ENCODE measurements at regions of chr2 and their contacts with region 1.

Region 1: DNA sequence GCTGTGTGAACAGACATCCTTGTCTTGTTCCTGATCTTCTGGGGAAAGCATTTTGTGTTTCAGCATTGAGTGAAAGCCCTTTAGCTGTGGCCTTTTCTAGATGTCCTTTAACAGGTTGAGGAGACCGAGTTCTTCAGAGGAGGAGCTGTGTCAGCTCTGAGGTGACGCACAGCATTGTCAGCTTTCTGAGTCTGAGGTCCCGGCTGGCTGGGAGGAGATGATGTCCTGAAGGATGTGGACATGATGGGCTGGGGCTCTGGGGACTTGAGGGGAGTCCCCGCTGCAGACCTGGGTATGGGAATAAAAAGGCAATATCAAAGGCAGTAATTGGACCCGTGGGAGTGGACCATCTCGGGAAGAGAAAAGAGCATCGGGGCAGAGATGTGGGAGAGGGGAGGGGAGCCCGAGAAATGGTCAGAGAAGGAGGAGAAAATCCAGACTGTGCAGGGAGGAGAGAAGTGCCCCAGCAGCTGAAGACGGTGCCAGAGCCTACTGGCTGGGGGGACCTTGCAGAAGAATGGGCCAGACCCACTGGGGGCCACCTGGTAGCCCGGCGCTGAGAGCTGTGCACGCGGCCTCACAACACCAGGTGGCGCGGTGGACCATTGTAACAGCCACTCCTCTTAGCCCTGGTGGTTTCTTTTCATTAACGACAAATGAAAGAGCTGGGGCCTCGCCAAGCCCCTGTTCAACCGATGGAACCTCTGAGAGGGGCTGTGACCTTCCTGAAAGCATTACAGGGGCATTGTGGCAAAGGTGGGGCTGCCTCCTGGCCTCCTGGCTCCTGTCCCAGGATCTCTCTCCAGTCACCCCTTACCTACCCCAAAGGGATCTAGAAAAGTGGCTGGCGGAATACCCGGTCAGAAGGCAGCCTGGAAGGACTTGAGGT is 61.6 kb downstream of the ST3GAL5 start:
- DNase-seq: peak; percentile 72 to 88
- ATAC-seq: peak; percentile 95 to 99
- H3K4me3 ChIP-seq: peak overlapping the region; percentile 21; the same call in 1 of the 3 replicates
- H3K27ac ChIP-seq: peak overlapping the region; percentile 74 to 84
- H3K4me1 ChIP-seq: peaks cover 8% of the 10 kb centered on the region
- CTCF ChIP-seq: peak; percentile 96
- EP300 ChIP-seq: no peak
- POLR2A ChIP-seq: no peak
- RAD21 ChIP-seq: peak; percentile 99

Region 2: DNA sequence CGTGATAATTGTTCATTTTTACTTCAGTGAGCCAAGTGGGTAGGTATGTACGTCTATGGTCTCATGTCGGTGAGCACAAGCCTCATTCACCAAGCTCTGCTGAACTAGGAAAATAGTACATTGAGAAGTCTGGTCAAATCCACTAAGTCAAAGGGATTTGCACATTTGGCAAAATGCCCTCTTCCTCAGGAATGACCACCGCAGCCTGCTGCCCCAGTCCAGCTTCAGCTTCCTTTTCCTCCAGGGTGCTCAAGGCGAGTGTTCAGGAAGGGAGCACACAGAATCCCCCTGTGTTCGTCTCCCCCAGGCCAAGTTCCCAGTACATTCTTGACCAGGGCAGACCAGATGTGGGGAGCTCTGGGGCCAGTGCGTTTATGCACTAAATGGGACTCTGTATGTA is 671.1 kb before region 1 on chr2:
- CTCF ChIA-PET with region 1: no interaction called
- POLR2A ChIA-PET with region 1: no interaction called
- DNase-seq: no peak
- ATAC-seq: no peak
- H3K4me3 ChIP-seq: no peak overlapping the region
- H3K27ac ChIP-seq: no peak overlapping the region
- H3K4me1 ChIP-seq: no peaks in the 10 kb centered on the region
- CTCF ChIP-seq: no peak
- EP300 ChIP-seq: no peak
- POLR2A ChIP-seq: no peak
- RAD21 ChIP-seq: no peak

Region 3: GRCh38 chr2:85642725-85643124 is 184.5 kb before region 1 on chr2:
- CTCF ChIA-PET with region 1: interaction called, 12 read pairs
- POLR2A ChIA-PET with region 1: no interaction called
- DNase-seq: no peak
- ATAC-seq: no peak
- H3K4me3 ChIP-seq: no peak overlapping the region
- H3K27ac ChIP-seq: no peak overlapping the region
- H3K4me1 ChIP-seq: peaks cover 1% of the 10 kb centered on the region; the same call in 1 of the 3 replicates
- CTCF ChIP-seq: no peak
- EP300 ChIP-seq: no peak
- POLR2A ChIP-seq: no peak
- RAD21 ChIP-seq: no peak

Region 4: DNA sequence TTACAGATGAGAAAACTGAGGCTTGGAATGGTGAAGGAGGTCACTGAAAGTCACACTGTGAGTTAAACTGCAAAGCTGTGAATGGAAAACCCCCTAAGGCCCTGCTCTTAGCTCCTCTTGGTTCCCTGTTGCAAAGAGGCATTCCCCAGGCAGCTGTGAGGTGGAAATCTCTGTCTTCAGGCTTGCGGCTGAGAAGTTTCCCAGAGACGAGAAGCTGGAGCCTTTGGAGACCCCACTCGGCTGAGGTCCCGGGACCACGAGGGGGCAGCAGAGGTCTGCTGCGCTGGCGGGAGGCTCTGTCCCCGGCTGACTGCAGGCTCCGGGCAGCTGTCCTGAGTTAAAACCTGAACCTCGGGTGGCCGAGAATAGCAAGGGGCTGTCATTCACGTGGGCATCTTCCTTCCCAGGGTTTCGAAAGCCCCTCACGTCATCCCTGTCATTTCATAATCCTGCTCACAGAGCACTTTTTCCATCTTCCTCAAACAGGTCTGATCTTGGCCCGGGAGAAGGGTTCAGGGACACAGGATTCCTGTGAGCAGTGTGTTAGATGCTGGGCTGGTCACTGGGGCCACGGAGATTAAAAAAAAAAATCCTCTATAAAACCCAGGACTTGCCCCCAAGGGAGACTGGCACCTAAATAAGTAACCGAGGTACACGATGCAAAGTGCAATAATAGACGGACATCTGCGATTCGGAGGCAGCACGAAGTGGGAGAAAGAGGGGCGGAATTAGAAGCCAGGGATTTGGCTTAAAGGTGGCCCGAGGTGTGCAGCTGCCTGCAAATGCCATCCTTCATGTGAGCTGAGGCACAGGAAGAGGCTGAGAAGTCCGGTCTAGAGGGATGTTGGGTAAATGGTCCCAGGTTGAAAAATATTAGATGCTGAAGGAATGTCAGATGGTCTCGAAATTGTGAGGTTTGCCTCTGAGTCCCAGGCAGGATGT is 98.1 kb before region 1 on chr2:
- CTCF ChIA-PET with region 1: interaction called, 1,675 read pairs
- POLR2A ChIA-PET with region 1: no interaction called
- DNase-seq: peak; percentile 83 to 93
- ATAC-seq: peak; percentile 96 to 99
- H3K4me3 ChIP-seq: 0 out of 3 replicates have a peak overlapping the region, but pooled peaks have one; percentile 11
- H3K27ac ChIP-seq: peak overlapping the region; percentile 68 to 70
- H3K4me1 ChIP-seq: peaks cover 24% of the 10 kb centered on the region
- CTCF ChIP-seq: peak; percentile 99
- EP300 ChIP-seq: peak in 1 of 2 experiments; percentile 51; a peak in 1 of 5 replicates
- POLR2A ChIP-seq: no peak
- RAD21 ChIP-seq: peak; percentile 100

Region 5: GRCh38 chr2:85843543-85843942 is 16.3 kb after region 1 on chr2:
- CTCF ChIA-PET with region 1: interaction called, 59 read pairs
- POLR2A ChIA-PET with region 1: no interaction called
- DNase-seq: peak; percentile 50 to 52
- ATAC-seq: peak in 1 of 2 experiments; percentile 49; a peak in 1 of 6 replicates
- H3K4me3 ChIP-seq: no peak overlapping the region
- H3K27ac ChIP-seq: no peak overlapping the region
- H3K4me1 ChIP-seq: no peaks in the 10 kb centered on the region
- CTCF ChIP-seq: peak; percentile 42
- EP300 ChIP-seq: no peak
- POLR2A ChIP-seq: no peak
- RAD21 ChIP-seq: peak in 1 of 2 experiments; percentile 31; a peak in 1 of 5 replicates

Region 6: GRCh38 chr2:85865539-85866164 is 38.4 kb after region 1 on chr2:
- CTCF ChIA-PET with region 1: interaction called, 24 read pairs
- POLR2A ChIA-PET with region 1: no interaction called
- DNase-seq: no peak
- ATAC-seq: peak in 1 of 2 experiments; percentile 13; a peak in 1 of 6 replicates
- H3K4me3 ChIP-seq: no peak overlapping the region
- H3K27ac ChIP-seq: no peak overlapping the region
- H3K4me1 ChIP-seq: no peaks in the 10 kb centered on the region
- CTCF ChIP-seq: no peak
- EP300 ChIP-seq: no peak
- POLR2A ChIP-seq: no peak
- RAD21 ChIP-seq: no peak

Region 7: DNA sequence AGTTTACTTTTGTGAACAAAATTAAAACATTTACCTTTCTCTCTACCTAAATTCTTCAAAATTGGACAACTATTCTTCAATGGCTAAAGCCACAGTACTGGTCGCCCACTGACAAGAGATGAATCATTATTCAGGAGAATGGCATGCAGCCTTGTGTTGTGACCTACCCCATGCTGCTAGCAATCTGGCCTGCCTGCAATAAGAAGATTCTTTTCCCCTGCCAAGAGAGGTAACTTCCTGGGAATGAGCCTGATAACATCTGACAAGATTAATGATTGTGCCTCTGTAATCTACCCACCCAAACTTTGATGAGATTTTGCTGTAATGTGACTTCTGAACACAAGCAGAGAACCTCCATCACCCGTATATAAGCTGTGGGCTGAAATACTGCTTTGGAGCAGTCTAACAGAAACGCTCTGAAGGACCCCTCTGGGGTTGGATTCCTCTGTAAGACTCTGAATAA is 108.5 kb after region 1 on chr2:
- CTCF ChIA-PET with region 1: interaction called, 14 read pairs
- POLR2A ChIA-PET with region 1: no interaction called
- DNase-seq: peak; percentile 87 to 99
- ATAC-seq: peak; percentile 82
- H3K4me3 ChIP-seq: peak overlapping the region; percentile 29
- H3K27ac ChIP-seq: peak overlapping the region; percentile 89 to 99
- H3K4me1 ChIP-seq: peaks cover 68% of the 10 kb centered on the region
- CTCF ChIP-seq: no peak
- EP300 ChIP-seq: peak; percentile 93 to 95; a peak in 4 of 5 replicates
- POLR2A ChIP-seq: no peak
- RAD21 ChIP-seq: peak; percentile 54 to 56

Region 8: DNA sequence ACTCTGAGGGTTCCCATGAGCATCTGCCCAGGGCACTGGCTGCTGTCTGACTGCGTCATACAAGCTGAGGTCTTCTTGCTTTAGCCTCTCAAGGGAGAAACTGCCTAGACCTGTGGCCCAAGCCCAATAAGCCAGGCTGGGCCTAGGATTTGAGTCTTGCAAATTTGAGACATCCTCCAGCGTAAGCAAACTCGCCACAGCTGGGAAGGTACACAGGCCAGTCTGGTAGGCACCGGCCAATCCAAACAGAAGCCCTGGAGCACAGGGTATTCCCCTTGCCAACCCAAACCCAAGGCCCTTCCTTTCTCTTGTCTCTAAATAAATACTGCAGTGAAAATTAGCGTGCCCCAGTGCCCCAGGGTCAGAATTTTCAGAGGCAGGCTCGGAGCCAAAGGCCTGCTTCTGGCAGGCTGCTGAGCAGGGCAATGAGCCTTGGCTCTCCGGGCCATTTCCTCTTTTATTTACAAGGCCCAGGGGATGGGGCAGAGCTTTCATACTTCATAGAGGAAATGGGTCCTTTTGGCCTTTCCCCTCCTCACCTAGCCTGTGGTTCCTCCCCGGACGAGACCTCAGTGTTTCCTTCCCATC is 245.1 kb after region 1 on chr2:
- CTCF ChIA-PET with region 1: interaction called, 766 read pairs
- POLR2A ChIA-PET with region 1: no interaction called
- DNase-seq: peak in 1 of 2 experiments; percentile 55
- ATAC-seq: peak; percentile 10 to 71; a peak in 4 of 6 replicates
- H3K4me3 ChIP-seq: no peak overlapping the region
- H3K27ac ChIP-seq: peak overlapping the region; percentile 7 to 72; a peak in 4 of 6 replicates
- H3K4me1 ChIP-seq: peaks cover 41% of the 10 kb centered on the region
- CTCF ChIP-seq: no peak
- EP300 ChIP-seq: no peak
- POLR2A ChIP-seq: no peak
- RAD21 ChIP-seq: no peak

Region 9: GRCh38 chr2:86396291-86396785 is 569.1 kb after region 1 on chr2:
- CTCF ChIA-PET with region 1: no interaction called
- POLR2A ChIA-PET with region 1: no interaction called
- DNase-seq: peak; percentile 38 to 72
- ATAC-seq: peak; percentile 85 to 94
- H3K4me3 ChIP-seq: no peak overlapping the region
- H3K27ac ChIP-seq: 0 out of 6 replicates have a peak overlapping the region, but pooled peaks of 1 of the 2 experiments have one; percentile 27
- H3K4me1 ChIP-seq: 0 out of 3 replicates have a peak, but pooled peaks cover 3% of the 10 kb centered on the region
- CTCF ChIP-seq: peak; percentile 55
- EP300 ChIP-seq: no peak
- POLR2A ChIP-seq: no peak
- RAD21 ChIP-seq: peak; percentile 71 to 79